Aorta (tissue), 5 donors: ENCODE measurements at regions of chr5 and their contacts with region 1.

Region 1: DNA sequence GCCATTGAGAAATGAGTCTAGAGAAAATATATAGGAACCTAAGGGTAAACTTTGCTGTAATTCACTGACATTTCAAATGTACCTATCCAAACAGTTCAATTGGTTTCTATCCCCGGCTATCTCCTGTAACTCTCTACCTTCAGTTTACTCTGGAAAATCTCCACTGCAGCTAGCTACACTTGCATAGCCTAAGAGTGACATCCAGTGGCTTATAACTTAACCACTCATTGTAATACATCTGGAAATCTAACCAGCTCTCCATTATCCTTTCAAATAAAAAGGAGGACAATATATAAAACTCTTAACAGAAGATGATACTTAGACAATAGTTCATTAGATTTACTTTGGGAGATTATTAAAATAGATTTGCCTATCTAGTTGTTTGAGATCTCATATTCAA is 35.3 kb upstream of the SPDL1 start:
- DNase-seq: no peak
- ATAC-seq: peak; percentile 64
- H3K4me3 ChIP-seq: no peak overlapping the region
- H3K27ac ChIP-seq: no peak overlapping the region
- H3K4me1 ChIP-seq: no peaks in the 10 kb centered on the region
- H3K27me3 ChIP-seq: no peaks in the 10 kb centered on the region

Region 2: DNA sequence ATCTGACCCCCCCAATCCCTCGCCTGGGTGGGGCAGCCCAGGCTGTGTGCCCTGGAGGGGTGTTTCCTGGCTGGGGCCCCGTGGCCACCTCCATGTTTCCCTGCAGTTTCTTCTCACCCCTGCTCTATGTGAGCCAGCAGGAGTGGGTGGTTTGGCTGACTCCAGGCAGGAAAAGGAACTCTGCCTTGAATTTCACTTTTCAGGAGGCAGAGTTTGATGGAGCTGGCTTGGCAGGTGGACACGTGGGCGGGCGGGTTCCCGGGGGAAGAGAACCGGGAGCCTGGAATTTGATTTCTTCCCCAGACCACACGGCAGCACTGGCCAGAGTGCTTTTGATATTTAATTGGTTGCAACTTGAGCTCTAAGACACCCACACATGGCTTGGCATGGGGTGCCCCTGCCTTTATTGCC is 849.3 kb before region 1 on chr5:
- intact Hi-C with region 1: loop called in 1 of 2 experiments (anchors 10 kb)
- DNase-seq: peak; percentile 69 to 80
- ATAC-seq: no peak
- H3K4me3 ChIP-seq: no peak overlapping the region
- H3K27ac ChIP-seq: no peak overlapping the region
- H3K4me1 ChIP-seq: no peaks in the 10 kb centered on the region
- H3K27me3 ChIP-seq: no peaks in the 10 kb centered on the region

Region 3: DNA sequence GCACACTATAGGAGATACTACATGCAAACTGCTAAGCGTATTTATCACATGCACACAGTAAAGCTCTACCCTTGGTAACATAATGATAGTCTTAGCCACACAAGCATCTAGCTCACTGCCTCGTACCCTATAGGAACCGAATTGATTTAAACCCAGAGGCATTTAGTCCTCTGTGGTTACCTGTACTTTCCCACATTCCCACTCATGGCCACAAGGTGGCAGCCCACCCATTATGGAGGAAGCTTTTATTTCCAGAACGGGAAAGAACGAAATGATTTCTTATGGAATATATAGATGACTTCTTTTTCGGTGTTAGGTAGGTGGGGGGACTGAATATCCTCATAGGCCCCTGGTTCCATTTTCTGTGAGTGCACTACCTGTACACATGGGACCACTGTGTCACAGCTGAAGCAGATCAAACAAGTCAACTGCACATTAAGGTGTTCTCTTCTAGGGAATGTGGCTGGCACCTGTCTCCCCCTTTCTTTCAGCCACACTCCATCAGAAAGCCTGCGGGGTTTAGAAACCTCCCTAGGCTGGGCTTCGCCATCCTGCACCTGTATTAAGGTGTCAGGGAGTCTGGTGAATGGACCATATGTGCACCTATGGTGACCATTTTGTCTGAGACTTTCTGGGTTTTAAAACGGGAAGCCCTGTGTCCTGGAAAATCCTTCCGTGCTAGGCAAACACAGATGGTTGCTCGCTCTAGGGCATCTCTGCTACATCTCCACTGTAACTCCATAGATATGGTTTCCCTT is 560.6 kb before region 1 on chr5:
- intact Hi-C with region 1: loop called in 1 of 2 experiments (anchors 5 kb)
- DNase-seq: peak; percentile 80 to 89
- ATAC-seq: peak; percentile 68
- H3K4me3 ChIP-seq: no peak overlapping the region
- H3K27ac ChIP-seq: no peak overlapping the region
- H3K4me1 ChIP-seq: no peaks in the 10 kb centered on the region
- H3K27me3 ChIP-seq: no peaks in the 10 kb centered on the region

Region 4: GRCh38 chr5:169416583-169417196 is 131.6 kb before region 1 on chr5:
- intact Hi-C with region 1: no loop called
- DNase-seq: peak; percentile 81 to 93
- ATAC-seq: peak; percentile 81
- H3K4me3 ChIP-seq: no peak overlapping the region
- H3K27ac ChIP-seq: no peak overlapping the region
- H3K4me1 ChIP-seq: no peaks in the 10 kb centered on the region
- H3K27me3 ChIP-seq: no peaks in the 10 kb centered on the region

Region 5: DNA sequence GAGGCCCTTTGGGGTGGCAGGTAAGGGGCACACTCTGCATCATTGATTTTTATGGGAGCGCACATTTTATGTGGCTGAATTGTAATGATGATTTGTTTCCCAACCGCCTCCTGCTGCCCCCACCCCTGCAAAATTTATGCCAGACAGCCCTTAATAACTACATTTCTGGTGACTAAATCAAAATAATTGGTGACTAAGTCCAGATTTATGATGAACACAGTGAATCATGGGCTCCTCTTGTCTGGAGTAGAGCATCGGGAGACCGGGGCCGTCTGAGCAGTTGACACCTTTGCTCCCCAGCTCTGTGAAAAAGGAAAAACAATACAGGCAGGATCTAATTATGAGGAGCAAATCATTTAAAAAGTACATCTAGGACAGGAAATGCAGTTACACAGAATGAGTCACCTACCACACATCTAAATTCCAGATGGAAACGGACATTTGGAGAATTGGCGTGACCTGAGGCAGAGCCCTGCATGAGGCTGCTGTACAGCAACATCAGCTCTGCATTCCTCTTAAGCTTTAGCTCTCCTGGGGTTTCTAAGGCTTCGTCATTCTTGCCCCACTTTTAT is 147.7 kb after region 1 on chr5:
- intact Hi-C with region 1: no loop called
- DNase-seq: no peak
- ATAC-seq: no peak
- H3K4me3 ChIP-seq: no peak overlapping the region
- H3K27ac ChIP-seq: no peak overlapping the region
- H3K4me1 ChIP-seq: no peaks in the 10 kb centered on the region
- H3K27me3 ChIP-seq: no peaks in the 10 kb centered on the region

Region 6: GRCh38 chr5:170892196-170892595 is 1343.9 kb after region 1 on chr5:
- intact Hi-C with region 1: no loop called
- DNase-seq: no peak
- ATAC-seq: no peak
- H3K4me3 ChIP-seq: no peak overlapping the region
- H3K27ac ChIP-seq: no peak overlapping the region
- H3K4me1 ChIP-seq: peaks cover 0 to 2% of the 10 kb centered on the region in 2 donors
- H3K27me3 ChIP-seq: no peaks in the 10 kb centered on the region